Activated CD8-positive, alpha-beta T cell treated with anti-CD3 and anti-CD28 coated beads for 36 hours (primary cell): ENCODE measurements at regions of chr3 and their contacts with region 1.

Region 1: GRCh38 chr3:114418724-114419543 is 125.1 kb downstream of the TIGIT start:
- DNase-seq: no peak
- ATAC-seq: peak; percentile 71
- H3K4me3 Mint-ChIP-seq: peak overlapping the region; percentile 55
- H3K27ac Mint-ChIP-seq: peak overlapping the region; percentile 80
- H3K4me1 Mint-ChIP-seq: peaks cover 33% of the 10 kb centered on the region
- H3K27me3 Mint-ChIP-seq: no peaks in the 10 kb centered on the region
- CTCF ChIP-seq: peak; percentile 96

Region 2: DNA sequence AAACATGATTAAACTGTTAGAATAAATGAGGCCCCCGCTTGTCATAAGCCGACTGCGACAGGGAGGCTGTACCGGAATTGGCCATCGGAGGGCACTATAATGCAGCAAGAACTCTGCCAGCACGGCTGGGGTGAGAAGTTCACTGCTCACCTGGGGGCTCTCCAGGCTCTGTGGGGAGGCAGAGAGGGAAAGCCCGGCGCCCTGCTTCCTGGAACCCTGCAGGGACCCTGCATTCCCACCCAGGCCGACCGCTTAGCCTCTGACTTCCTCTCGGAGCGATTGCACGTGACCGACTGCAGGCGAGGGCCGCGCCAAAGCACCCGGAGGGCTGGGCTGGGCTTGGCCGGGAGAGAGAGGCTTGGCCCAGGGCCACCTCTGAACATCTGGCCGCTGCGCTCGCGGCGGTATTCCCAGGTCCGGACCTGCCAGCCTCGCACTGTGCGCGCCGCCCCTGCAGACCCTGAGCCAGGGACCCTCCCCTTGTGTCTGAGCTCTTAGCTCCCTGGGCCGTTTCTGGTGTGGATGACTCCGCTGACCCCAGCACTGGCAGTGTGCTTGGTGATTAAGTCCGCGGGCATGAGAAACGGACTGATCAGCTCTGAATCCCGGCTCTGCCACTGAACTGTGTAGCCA is 266.3 kb before region 1 on chr3:
- CTCF ChIA-PET with region 1: interaction called, 10 read pairs
- POLR2A ChIA-PET with region 1: interaction called, 4 read pairs
- intact Hi-C with region 1: loop called (anchors 2 kb)
- DNase-seq: peak; percentile 92
- ATAC-seq: peak; percentile 99
- H3K4me3 Mint-ChIP-seq: peak overlapping the region; percentile 22
- H3K27ac Mint-ChIP-seq: no peak overlapping the region
- H3K4me1 Mint-ChIP-seq: peaks cover 13% of the 10 kb centered on the region
- H3K27me3 Mint-ChIP-seq: no peaks in the 10 kb centered on the region
- CTCF ChIP-seq: peak; percentile 95

Region 3: DNA sequence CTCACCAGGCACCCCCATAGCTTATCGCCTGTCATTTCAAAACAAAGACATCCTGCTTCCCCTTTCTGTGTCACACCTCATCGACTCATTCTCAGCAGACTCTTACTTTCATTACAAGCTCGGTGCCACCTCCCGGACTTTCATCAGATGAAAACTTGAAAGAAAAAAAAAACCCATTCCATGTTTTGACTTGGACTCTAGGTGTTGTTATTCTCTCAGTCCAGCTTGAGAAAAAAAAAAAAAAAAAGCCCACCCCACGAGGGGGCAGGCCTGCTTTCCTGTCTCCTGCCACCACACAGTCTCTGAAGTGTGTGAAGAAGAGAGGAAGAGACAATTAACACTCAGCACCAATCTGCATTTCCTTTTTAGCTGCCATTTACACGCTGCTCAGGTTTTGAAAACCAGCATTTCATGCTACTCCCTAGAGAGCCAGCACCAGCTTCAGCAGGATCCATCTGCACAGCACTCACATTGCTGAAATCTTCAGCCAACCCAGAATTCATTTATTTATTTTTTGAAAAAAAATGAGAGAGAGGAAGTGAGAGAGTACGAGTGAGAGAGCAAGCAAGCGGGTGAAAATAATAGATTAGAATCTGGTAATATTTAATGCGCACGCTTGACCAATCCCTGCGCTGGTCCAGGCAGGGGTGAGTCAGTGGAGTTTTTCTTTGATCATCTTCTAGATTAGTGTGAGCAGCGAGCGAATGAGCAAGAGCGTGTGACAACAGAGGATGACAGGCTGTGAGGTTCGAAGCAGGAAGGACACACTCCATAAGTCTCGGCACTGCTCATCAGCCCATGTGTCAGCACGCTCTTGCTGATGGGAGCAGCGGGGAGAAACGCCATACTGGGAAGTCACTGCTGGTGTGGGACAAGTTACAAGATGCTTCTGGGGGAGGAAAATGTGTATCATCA is 205.1 kb before region 1 on chr3:
- CTCF ChIA-PET with region 1: interaction called, 8 read pairs
- POLR2A ChIA-PET with region 1: interaction called, 4 read pairs
- intact Hi-C with region 1: loop called (anchors 5 kb)
- DNase-seq: peak; percentile 88
- ATAC-seq: peak; percentile 68
- H3K4me3 Mint-ChIP-seq: no peak overlapping the region
- H3K27ac Mint-ChIP-seq: no peak overlapping the region
- H3K4me1 Mint-ChIP-seq: peaks cover 21% of the 10 kb centered on the region
- H3K27me3 Mint-ChIP-seq: no peaks in the 10 kb centered on the region
- CTCF ChIP-seq: no peak

Region 4: GRCh38 chr3:114344492-114344891 is 74.4 kb before region 1 on chr3:
- CTCF ChIA-PET with region 1: no interaction called
- POLR2A ChIA-PET with region 1: no interaction called
- intact Hi-C with region 1: no loop called
- DNase-seq: no peak
- ATAC-seq: peak; percentile 49
- H3K4me3 Mint-ChIP-seq: no peak overlapping the region
- H3K27ac Mint-ChIP-seq: no peak overlapping the region
- H3K4me1 Mint-ChIP-seq: peaks cover 21% of the 10 kb centered on the region
- H3K27me3 Mint-ChIP-seq: no peaks in the 10 kb centered on the region
- CTCF ChIP-seq: no peak

Region 5: DNA sequence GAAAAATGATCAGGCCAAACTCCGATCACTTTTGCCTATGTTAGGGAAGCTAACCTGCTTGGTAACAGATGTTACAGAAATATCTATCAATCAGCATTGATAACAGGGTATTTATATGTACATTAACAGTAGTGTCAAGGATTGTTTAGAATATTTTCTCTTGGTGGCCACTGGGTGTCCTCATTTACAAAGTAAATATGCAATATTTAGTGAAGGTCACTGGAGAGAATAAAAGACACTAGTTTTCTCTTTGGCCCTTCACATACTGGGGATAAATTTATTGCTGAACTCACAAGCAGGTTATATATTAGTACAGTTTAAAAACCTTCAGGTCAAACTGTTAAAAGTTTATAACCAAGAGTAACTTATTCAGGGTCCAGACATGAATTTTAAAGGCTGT is 56.1 kb before region 1 on chr3:
- CTCF ChIA-PET with region 1: interaction called, 17 read pairs
- POLR2A ChIA-PET with region 1: no interaction called
- intact Hi-C with region 1: no loop called
- DNase-seq: no peak
- ATAC-seq: peak; percentile 74
- H3K4me3 Mint-ChIP-seq: no peak overlapping the region
- H3K27ac Mint-ChIP-seq: no peak overlapping the region
- H3K4me1 Mint-ChIP-seq: peaks cover 22% of the 10 kb centered on the region
- H3K27me3 Mint-ChIP-seq: no peaks in the 10 kb centered on the region
- CTCF ChIP-seq: peak; percentile 62

Region 6: DNA sequence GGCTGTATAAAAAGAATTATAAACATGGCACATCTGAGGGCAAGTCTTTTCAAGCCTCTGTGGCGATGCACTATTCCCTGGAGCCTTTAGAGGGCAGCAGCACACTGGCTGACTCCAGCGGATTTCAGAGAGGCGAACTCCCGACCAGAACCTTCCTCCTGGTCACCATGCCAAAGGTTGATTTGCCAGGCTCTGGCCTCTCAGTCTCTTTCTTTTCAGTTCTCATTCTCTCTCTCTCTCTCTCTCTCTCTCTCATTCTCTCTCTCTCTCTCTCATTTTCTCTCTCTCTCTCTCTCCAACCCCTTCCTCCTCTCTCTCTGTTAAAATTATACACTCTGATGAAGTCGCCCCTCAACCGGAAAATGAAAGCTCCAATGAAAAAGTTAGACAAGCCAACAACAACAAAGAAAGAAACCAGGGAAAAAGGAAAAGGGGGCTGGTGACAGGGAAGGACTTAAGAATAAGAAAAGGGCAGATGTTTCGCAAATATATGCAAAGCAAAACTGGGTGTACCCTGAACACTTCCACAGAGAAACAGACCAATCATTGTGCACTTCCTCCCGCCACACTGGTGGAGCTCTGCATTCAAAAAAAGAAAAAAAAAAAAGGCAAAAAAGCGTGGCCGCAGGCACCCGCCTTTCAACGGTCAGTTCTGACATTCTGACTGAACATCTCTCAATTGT is 34.9 kb before region 1 on chr3:
- CTCF ChIA-PET with region 1: interaction called, 175 read pairs
- POLR2A ChIA-PET with region 1: interaction called, 3 read pairs
- intact Hi-C with region 1: loop called (anchors 1 kb)
- DNase-seq: peak; percentile 83
- ATAC-seq: peak; percentile 96
- H3K4me3 Mint-ChIP-seq: no peak overlapping the region
- H3K27ac Mint-ChIP-seq: no peak overlapping the region
- H3K4me1 Mint-ChIP-seq: peaks cover 7% of the 10 kb centered on the region
- H3K27me3 Mint-ChIP-seq: no peaks in the 10 kb centered on the region
- CTCF ChIP-seq: peak; percentile 93

Region 7: GRCh38 chr3:114393367-114394072 is 25.4 kb before region 1 on chr3:
- CTCF ChIA-PET with region 1: interaction called, 19 read pairs
- POLR2A ChIA-PET with region 1: interaction called, 3 read pairs
- intact Hi-C with region 1: no loop called
- DNase-seq: no peak
- ATAC-seq: peak; percentile 70
- H3K4me3 Mint-ChIP-seq: no peak overlapping the region
- H3K27ac Mint-ChIP-seq: no peak overlapping the region
- H3K4me1 Mint-ChIP-seq: peaks cover 35% of the 10 kb centered on the region
- H3K27me3 Mint-ChIP-seq: no peaks in the 10 kb centered on the region
- CTCF ChIP-seq: no peak

Region 8: GRCh38 chr3:114432310-114432709 is 13.4 kb after region 1 on chr3:
- CTCF ChIA-PET with region 1: interaction called, 21 read pairs
- POLR2A ChIA-PET with region 1: interaction called, 3 read pairs
- intact Hi-C with region 1: no loop called
- DNase-seq: no peak
- ATAC-seq: no peak
- H3K4me3 Mint-ChIP-seq: no peak overlapping the region
- H3K27ac Mint-ChIP-seq: no peak overlapping the region
- H3K4me1 Mint-ChIP-seq: no peaks in the 10 kb centered on the region
- H3K27me3 Mint-ChIP-seq: no peaks in the 10 kb centered on the region
- CTCF ChIP-seq: no peak

Region 9: GRCh38 chr3:114498779-114499370 is 79.9 kb after region 1 on chr3:
- CTCF ChIA-PET with region 1: no interaction called
- POLR2A ChIA-PET with region 1: no interaction called
- intact Hi-C with region 1: no loop called
- DNase-seq: no peak
- ATAC-seq: no peak
- H3K4me3 Mint-ChIP-seq: no peak overlapping the region
- H3K27ac Mint-ChIP-seq: no peak overlapping the region
- H3K4me1 Mint-ChIP-seq: peaks cover 35% of the 10 kb centered on the region
- H3K27me3 Mint-ChIP-seq: peaks cover 1% of the 10 kb centered on the region
- CTCF ChIP-seq: no peak

Region 10: GRCh38 chr3:114569186-114569585 is 150.3 kb after region 1 on chr3:
- CTCF ChIA-PET with region 1: no interaction called
- POLR2A ChIA-PET with region 1: no interaction called
- intact Hi-C with region 1: no loop called
- DNase-seq: no peak
- ATAC-seq: no peak
- H3K4me3 Mint-ChIP-seq: no peak overlapping the region
- H3K27ac Mint-ChIP-seq: no peak overlapping the region
- H3K4me1 Mint-ChIP-seq: peaks cover 16% of the 10 kb centered on the region
- H3K27me3 Mint-ChIP-seq: no peaks in the 10 kb centered on the region
- CTCF ChIP-seq: no peak